ENCODE measurements at regions of chr9 and their contacts with region 1.

Region 1: GRCh38 chr9:693201-694091 is 148.1 kb upstream of the DMRT1 start:
- DNase-seq: peak; percentile 41
- H3K4me3 Mint-ChIP-seq: peak overlapping the region; percentile 63
- H3K27ac Mint-ChIP-seq: peak overlapping the region; percentile 75
- H3K4me1 Mint-ChIP-seq: peaks cover 52% of the 10 kb centered on the region
- H3K27me3 Mint-ChIP-seq: no peaks in the 10 kb centered on the region
- CTCF ChIP-seq: no peak

Region 2: DNA sequence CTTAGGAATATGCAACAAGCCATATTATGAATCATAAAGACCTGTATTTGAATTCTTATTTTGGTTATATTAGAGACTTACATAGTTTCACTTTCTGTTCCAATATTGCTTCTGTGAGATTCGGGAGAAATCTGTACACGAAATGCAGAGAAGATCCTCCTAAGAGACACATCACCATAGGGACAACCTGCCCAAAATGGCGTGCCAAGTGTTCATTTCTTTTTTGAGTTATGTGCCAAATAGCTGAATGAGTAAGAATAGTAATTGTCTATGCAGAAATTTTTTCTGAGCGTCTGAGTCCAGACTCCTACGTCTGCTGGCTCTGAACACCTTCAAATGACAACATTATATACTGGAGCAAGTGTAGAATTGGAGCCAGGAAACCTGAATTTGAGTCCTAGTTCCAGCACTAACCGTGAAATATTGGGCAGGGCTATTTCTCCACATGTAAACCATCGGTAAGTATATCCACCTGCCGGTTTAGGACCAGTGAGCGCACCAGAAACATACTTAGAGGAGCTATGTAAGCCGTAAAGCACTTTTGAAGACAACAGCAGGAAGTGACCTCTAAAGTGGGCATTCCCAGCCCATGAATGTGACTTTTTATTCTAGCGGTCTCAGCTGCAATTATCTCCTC is 15.9 kb before region 1 on chr9:
- CTCF ChIA-PET with region 1: interaction called, 7 read pairs
- POLR2A ChIA-PET with region 1: interaction called, 42 read pairs
- intact Hi-C with region 1: no loop called
- DNase-seq: peak; percentile 30
- H3K4me3 Mint-ChIP-seq: peak overlapping the region; percentile 71
- H3K27ac Mint-ChIP-seq: peak overlapping the region; percentile 79
- H3K4me1 Mint-ChIP-seq: peaks cover 33% of the 10 kb centered on the region
- H3K27me3 Mint-ChIP-seq: no peaks in the 10 kb centered on the region
- CTCF ChIP-seq: no peak

Region 3: DNA sequence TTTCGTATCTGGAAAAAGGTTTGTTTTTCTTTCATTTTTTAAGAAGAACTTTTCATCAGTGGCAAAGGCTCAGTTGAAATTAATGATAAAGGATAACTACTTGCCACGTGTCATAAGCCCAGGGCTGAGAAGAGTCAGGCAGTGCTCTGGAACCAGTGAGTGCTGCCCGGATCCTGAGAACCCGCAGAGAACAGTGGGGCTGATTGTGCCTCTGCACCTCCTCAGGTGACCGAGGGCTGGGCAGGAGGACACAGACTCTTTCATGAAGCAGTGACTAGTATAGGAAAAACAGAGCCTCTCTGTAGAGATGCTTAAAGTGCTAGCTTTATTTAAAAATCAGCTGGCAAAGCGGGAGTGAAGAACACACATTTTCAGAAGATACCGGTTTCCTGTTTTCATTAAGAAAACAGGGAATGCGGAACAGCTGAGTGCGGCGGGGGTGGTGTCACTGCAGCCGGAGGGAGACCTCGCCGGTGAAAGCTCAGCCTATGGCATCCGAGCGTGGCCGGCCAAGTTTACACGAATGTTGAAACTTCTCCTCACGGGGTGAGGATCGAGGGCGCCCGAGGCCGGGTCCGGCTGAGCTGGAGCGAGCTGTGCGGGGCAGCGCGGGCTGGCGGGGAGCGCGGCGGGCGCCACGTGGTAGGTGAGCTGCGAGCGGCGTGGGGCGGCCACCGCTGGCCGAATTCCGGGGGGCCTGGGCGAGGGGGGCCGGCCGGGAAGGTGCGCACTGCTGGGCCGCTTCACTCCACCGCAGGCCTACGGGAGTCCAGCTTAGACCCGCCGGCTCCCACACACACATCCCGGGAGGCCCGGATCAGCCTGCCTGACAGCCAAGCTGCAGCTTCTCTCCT is 13.4 kb after region 1 on chr9:
- CTCF ChIA-PET with region 1: interaction called, 3 read pairs
- POLR2A ChIA-PET with region 1: interaction called, 69 read pairs
- intact Hi-C with region 1: no loop called
- DNase-seq: peak; percentile 75
- H3K4me3 Mint-ChIP-seq: peak overlapping the region; percentile 77
- H3K27ac Mint-ChIP-seq: peak overlapping the region; percentile 88
- H3K4me1 Mint-ChIP-seq: peaks cover 28% of the 10 kb centered on the region
- H3K27me3 Mint-ChIP-seq: no peaks in the 10 kb centered on the region
- CTCF ChIP-seq: no peak

Region 4: DNA sequence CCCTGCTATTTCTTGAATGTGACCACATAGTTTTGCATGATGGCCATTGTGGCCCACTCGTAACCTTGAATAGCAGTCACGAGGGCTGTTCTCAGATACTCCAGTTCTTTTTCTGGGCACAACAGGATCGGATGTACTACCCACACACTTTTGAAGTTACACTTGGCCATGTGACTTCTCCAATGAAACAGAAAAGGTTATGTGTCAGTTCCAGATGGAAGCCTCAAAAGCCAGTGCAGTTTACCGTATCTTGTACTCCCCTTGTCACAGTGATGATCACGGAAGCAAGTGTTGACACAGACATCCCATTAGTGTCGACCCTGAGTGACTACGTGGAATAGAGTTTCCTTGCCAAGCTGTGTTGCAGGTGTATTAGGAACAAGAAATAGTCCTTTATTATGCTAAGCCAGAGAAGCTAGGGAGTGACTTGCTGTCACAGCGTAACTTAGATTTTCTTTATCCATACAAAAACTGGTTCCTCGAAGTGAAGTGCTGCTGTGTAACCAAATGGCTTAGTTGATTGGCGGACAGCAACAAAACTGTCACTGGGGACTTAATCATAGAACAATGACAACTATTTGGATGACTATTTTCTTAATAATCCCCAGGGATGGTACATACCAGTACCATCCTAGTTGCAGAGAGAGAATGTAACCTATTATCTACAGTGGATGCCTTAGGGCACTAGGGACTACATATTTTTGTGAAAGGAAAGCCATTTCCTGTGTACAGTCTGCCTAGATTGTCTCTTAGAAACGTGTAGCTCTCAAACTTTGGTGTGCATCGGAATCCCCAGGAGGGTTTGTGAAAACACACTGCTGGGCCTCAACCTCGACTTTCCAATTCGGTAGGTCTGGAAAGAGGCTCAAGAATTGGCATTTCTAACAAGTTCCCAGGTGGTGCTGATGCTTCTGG is 57.9 kb after region 1 on chr9:
- CTCF ChIA-PET with region 1: no interaction called
- POLR2A ChIA-PET with region 1: interaction called, 12 read pairs
- intact Hi-C with region 1: loop called (anchors 5 kb)
- DNase-seq: no peak
- H3K4me3 Mint-ChIP-seq: no peak overlapping the region
- H3K27ac Mint-ChIP-seq: peak overlapping the region; percentile 78
- H3K4me1 Mint-ChIP-seq: peaks cover 15% of the 10 kb centered on the region
- H3K27me3 Mint-ChIP-seq: no peaks in the 10 kb centered on the region
- CTCF ChIP-seq: no peak

Measured in MCF 10A (cell line).